MCF 10A (cell line): ENCODE measurements at regions of chr9 and their contacts with region 1.

Region 1: DNA sequence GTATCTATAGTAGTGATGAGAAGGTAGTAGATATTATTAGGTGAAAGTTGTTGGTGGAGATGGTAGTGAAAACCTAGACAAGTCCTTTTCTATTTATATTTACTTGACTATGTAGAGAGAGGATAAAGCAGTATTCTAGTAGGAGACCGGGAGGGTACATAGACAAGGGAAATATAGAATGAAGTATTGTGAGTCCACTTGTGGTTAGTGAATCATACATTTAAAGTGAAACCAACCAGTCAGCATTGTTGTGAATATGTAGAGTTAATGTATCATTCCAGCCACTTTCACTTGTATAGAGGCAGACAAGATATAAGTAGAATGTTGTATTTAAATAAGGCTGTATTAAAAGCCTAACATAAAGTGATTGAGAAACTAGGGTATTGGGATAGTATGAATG is 1711.3 kb upstream of the ACO1 start:
- DNase-seq: peak; percentile 6
- H3K4me3 Mint-ChIP-seq: no peak overlapping the region
- H3K27ac Mint-ChIP-seq: no peak overlapping the region
- H3K4me1 Mint-ChIP-seq: no peaks in the 10 kb centered on the region
- H3K27me3 Mint-ChIP-seq: no peaks in the 10 kb centered on the region
- CTCF ChIP-seq: no peak

Region 2: GRCh38 chr9:30591461-30591860 is 81.7 kb before region 1 on chr9:
- CTCF ChIA-PET with region 1: no interaction called
- POLR2A ChIA-PET with region 1: no interaction called
- intact Hi-C with region 1: no loop called
- DNase-seq: no peak
- H3K4me3 Mint-ChIP-seq: no peak overlapping the region
- H3K27ac Mint-ChIP-seq: no peak overlapping the region
- H3K4me1 Mint-ChIP-seq: no peaks in the 10 kb centered on the region
- H3K27me3 Mint-ChIP-seq: no peaks in the 10 kb centered on the region
- CTCF ChIP-seq: no peak

Region 3: DNA sequence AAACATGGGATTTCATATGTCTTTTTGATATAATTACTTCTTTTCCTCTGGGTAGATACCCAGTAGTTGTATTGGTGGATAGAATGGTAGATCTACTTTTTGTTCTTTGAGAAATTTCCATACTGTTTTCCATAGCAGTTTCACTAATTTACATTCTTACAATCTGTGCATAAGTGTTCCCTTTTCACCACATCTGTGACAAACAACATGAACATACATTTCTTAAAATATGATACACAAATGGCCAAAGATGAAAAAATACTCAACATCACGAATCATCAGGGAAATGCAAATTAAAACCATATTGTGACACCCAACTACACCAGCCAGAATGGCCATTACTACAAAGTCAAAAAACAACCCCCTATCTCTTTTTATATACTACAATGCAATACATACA is 67.2 kb before region 1 on chr9:
- CTCF ChIA-PET with region 1: no interaction called
- POLR2A ChIA-PET with region 1: no interaction called
- intact Hi-C with region 1: no loop called
- DNase-seq: no peak
- H3K4me3 Mint-ChIP-seq: no peak overlapping the region
- H3K27ac Mint-ChIP-seq: no peak overlapping the region
- H3K4me1 Mint-ChIP-seq: peaks cover 6% of the 10 kb centered on the region
- H3K27me3 Mint-ChIP-seq: peaks cover 11% of the 10 kb centered on the region
- CTCF ChIP-seq: no peak

Region 4: GRCh38 chr9:30732060-30732459 is 58.9 kb after region 1 on chr9:
- CTCF ChIA-PET with region 1: no interaction called
- POLR2A ChIA-PET with region 1: no interaction called
- intact Hi-C with region 1: loop called (anchors 10 kb)
- DNase-seq: no peak
- H3K4me3 Mint-ChIP-seq: no peak overlapping the region
- H3K27ac Mint-ChIP-seq: no peak overlapping the region
- H3K4me1 Mint-ChIP-seq: no peaks in the 10 kb centered on the region
- H3K27me3 Mint-ChIP-seq: peaks cover 19% of the 10 kb centered on the region
- CTCF ChIP-seq: no peak